OCI-LY7 (cell line): ENCODE measurements at regions of chr20 and their contacts with region 1.

Region 1: DNA sequence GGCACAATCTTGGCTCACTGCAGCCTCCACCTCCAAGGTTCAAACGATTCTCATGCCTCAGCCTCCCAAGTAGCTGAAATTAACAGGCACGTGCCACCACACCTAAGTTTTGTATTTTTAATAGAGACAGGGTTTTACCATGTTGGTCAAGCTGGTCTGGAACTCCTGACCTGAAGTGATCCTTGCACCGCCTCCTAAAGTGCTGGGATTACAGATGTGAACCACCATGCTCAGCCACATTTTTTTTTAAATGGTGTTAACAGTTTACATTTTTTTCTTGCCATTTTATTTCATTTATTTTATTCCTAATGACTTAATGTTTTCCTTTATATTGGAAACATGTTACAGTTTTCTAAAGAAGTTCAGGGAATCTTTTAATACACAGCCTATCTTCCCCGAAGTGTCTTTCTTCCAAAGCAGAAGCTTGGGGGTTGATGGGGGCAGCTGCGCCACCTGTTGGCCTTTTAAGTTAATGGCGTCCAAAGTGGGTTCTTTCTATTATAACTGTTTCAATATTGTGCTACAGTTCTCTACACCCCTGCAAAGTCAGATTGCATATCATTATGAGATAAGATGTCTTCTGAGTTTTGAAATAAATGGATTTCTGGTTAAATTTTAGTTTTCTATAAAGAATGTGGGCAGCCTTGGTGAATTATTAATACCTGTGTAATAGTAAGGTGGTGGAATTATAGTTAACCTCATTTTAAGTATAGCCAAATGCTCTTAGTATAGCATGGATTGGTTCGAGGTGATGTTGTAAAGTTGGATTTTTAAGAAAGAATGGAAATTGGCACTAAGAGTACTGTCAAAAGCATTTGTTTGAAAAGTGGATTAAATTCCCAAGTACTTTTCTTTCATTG is 42.0 kb upstream of the PLCG1 start:
- DNase-seq: peak; percentile 69
- H3K4me3 ChIP-seq: no peak overlapping the region
- H3K27ac ChIP-seq: no peak overlapping the region
- H3K4me1 ChIP-seq: no peaks in the 10 kb centered on the region
- CTCF ChIP-seq: peak; percentile 100

Region 2: DNA sequence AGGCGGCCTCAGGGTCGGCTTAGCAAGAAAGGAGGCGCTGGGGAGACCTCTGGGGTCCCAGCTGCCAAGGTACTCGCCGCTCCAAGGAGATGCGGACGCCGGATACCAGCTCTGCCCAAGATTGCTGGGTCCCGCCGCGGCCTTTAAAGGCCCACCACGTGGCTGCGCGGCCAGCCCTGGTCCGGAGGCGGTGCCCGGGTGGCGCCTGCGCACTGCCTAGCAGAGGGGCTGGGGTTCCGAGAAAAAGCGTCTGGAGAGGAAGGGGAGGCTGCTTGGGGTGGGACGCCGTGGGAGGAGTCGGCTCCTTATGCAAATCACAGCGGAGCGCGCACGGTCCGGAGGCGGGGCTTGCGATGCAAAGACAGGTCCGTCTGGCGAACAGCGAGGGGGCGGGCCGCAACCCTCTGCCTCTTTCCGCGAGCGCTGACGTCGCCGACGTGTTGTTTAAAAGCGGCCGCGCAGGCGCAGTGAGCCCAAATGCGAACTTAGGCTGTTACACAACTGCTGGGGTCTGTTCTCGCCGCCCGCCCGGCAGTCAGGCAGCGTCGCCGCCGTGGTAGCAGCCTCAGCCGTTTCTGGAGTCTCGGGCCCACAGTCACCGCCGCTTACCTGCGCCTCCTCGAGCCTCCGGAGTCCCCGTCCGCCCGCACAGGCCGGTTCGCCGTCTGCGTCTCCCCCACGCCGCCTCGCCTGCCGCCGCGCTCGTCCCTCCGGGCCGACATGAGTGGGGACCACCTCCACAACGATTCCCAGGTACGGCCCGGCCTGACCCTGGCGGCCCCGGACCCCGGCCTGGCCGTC is 66.8 kb before region 1 on chr20 and contains the start of gene TOP1:
- CTCF ChIA-PET with region 1: no interaction called
- POLR2A ChIA-PET with region 1: no interaction called
- intact Hi-C with region 1: loop called (anchors 2 kb)
- DNase-seq: peak; percentile 100
- H3K4me3 ChIP-seq: peak within 1 kb of the TSS; percentile 88
- H3K27ac ChIP-seq: peak within 1 kb of the TSS; percentile 54
- H3K4me1 ChIP-seq: peaks cover 61% of the 10 kb centered on the region
- CTCF ChIP-seq: no peak
- total RNA-seq, gene TOP1: 44.6 and 53.0 TPM in 2 replicates

Region 3: GRCh38 chr20:41074441-41074840 is 20.9 kb before region 1 on chr20:
- CTCF ChIA-PET with region 1: no interaction called
- POLR2A ChIA-PET with region 1: no interaction called
- intact Hi-C with region 1: no loop called
- DNase-seq: no peak
- H3K4me3 ChIP-seq: no peak overlapping the region
- H3K27ac ChIP-seq: no peak overlapping the region
- H3K4me1 ChIP-seq: peaks cover 57% of the 10 kb centered on the region
- CTCF ChIP-seq: no peak